Tibial artery (tissue), 4 donors: ENCODE measurements at regions of chr15 and their contacts with region 1.

Region 1: DNA sequence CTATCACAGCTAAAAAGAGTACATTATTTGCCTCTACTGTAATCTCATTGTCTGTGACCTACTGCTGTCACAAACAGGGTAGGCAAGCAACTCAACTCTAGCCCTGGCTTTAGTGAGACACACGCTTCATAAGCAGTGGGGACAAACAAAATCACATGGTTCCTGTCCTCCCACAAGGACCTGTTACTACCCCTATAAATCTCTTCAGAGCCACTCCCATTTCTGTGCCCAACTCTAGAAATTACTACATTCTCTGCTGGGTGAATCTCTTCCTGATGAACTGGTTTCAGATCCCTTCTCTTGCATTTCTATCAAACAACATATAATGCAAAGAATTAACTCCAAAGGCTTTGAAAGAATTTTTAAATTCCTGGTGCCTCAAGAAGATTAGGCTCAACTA is 117.3 kb downstream of the DMXL2 start:
- DNase-seq: no peak
- H3K4me3 ChIP-seq: no peak overlapping the region
- H3K27ac ChIP-seq: no peak overlapping the region
- H3K4me1 ChIP-seq: no peaks in the 10 kb centered on the region
- H3K27me3 ChIP-seq: no peaks in the 10 kb centered on the region
- CTCF ChIP-seq: no peak

Region 2: GRCh38 chr15:53114960-53115359 is 1609.7 kb after region 1 on chr15:
- intact Hi-C with region 1: loop called (anchors 5 kb)
- DNase-seq: no peak
- H3K4me3 ChIP-seq: no peak overlapping the region
- H3K27ac ChIP-seq: no peak overlapping the region
- H3K4me1 ChIP-seq: no peaks in the 10 kb centered on the region
- H3K27me3 ChIP-seq: no peaks in the 10 kb centered on the region
- CTCF ChIP-seq: no peak